Activated B cell treated with CpG ODN at 0.5 μM for 24 hours (primary cell): ENCODE measurements at regions of chr2 and their contacts with region 1.

Region 1: DNA sequence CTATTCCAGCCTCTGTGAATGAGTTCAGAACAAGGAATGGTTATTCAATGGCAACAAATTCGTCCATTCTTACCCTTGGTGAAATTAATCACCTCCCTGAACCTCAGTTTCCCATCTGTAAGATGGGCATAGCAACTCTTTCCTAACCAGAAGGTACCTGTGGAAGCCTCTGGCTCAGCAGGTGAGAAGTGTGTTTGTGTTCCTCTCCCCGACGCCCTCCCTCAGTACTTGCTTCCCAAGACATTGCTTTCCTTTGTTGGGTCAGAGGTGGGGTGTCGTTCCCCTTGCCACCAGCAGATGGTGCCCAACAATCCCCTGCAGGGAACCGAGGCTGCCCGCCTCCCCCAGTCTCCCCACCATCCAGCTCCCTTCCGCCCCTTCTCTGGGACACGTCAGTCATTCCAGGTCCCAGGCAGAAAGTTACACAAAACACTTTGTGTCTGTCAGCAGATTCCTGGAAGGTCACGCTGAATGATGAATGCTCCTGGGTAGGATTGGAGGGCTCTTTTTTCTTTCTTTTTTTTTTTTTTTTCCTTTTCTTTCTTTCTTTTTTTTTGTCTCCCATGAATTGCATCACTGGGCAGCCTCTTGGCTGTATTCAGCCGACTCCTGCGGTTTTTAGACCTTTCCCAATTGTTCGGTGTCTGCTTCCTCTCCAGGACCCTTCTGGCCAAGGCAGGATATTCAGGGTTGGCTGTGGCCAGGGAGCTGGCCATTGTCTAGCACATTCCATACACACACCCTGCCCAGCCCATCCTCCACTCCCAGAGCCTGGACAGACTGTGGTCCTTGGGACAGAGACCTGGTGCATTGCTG is 117.3 kb downstream of the LPIN1 start:
- DNase-seq: peak; percentile 41
- ATAC-seq: peak; percentile 65
- H3K4me3 Mint-ChIP-seq: peak overlapping the region; percentile 47
- H3K27ac Mint-ChIP-seq: peak overlapping the region; percentile 41
- H3K4me1 Mint-ChIP-seq: peaks cover 92% of the 10 kb centered on the region
- H3K27me3 Mint-ChIP-seq: no peaks in the 10 kb centered on the region
- CTCF ChIP-seq: peak; percentile 85

Region 2: DNA sequence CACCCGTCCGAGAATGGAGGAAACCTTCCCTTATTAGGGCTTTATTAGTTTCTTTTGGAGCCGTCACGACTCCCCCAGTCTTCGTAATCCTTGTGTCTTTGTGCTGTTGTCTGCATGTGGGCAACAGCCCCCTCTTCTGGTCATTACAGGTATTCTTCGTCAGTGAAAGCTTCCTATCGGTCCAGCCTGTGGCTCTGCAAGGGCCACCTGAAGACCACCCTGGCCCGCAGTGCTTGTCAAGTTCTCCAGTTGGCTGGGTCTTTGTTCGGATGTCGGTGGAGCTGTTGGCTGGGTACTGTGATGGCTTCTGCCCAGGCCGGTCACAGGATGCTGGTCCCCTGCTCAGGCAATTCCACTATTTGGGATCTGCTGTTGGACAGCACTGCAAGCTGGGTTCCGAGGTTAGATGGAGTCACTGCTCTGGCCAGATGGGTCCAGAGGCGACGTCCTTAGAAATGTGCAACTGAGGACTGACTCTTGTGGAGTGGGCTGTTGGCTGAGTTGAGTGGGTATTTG is 416.9 kb before region 1 on chr2:
- CTCF ChIA-PET with region 1: no interaction called
- POLR2A ChIA-PET with region 1: no interaction called
- intact Hi-C with region 1: no loop called
- DNase-seq: peak; percentile 19
- ATAC-seq: peak; percentile 65
- H3K4me3 Mint-ChIP-seq: no peak overlapping the region
- H3K27ac Mint-ChIP-seq: no peak overlapping the region
- H3K4me1 Mint-ChIP-seq: no peaks in the 10 kb centered on the region
- H3K27me3 Mint-ChIP-seq: no peaks in the 10 kb centered on the region
- CTCF ChIP-seq: peak; percentile 18

Region 3: DNA sequence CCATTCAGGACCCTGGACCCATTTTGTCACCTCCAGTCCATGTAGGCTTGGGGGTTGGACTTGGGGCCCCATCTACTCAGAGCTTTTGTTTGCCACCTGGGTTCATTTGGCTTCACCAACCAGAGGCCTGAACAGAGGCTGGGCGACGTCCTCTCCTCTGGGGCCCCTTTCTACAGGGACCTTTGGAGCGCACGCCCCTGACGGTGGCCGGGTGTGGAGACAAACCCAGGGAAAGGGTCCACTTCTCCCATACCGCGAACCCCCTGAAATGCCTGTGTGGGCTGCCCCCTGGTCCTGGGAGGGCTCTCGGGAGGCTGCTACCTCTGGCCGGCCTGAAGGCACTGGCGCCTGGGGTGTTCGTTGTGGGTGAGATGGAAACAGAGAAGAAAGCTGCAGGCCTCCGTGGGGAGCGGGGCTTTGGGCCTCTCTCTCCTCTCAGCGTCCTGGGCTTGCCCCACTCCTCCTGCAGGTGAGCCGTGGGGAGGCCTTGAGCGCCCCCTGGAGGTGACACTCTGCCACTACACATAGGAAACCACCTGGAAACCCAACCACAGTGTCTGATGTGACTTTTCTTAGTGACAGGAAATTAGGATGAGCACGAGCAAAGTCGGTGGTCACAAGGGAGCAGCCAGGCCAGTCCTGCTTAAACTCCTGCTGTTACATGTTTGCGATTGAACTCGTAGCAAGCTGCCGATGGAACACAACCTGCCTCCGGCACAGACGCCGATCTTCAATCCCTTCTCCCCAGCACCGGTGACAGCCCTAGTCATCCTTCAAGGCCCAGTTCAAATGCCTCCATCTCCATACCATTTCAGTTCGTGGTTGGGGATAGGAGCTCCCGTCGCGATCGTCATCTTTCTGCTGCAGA is 181.8 kb before region 1 on chr2:
- CTCF ChIA-PET with region 1: no interaction called
- POLR2A ChIA-PET with region 1: no interaction called
- intact Hi-C with region 1: no loop called
- DNase-seq: no peak
- ATAC-seq: peak; percentile 73
- H3K4me3 Mint-ChIP-seq: no peak overlapping the region
- H3K27ac Mint-ChIP-seq: no peak overlapping the region
- H3K4me1 Mint-ChIP-seq: no peaks in the 10 kb centered on the region
- H3K27me3 Mint-ChIP-seq: peaks cover 26% of the 10 kb centered on the region
- CTCF ChIP-seq: no peak

Region 4: GRCh38 chr2:11829947-11830707 is 33.6 kb before region 1 on chr2:
- CTCF ChIA-PET with region 1: interaction called, 8 read pairs
- POLR2A ChIA-PET with region 1: interaction called, 4 read pairs
- intact Hi-C with region 1: loop called (anchors 1 kb)
- DNase-seq: peak; percentile 40
- ATAC-seq: peak; percentile 66
- H3K4me3 Mint-ChIP-seq: peak overlapping the region; percentile 75
- H3K27ac Mint-ChIP-seq: peak overlapping the region; percentile 75
- H3K4me1 Mint-ChIP-seq: peaks cover 64% of the 10 kb centered on the region
- H3K27me3 Mint-ChIP-seq: no peaks in the 10 kb centered on the region
- CTCF ChIP-seq: no peak

Region 5: GRCh38 chr2:11945139-11946126 is 81.7 kb after region 1 on chr2:
- CTCF ChIA-PET with region 1: no interaction called
- POLR2A ChIA-PET with region 1: no interaction called
- intact Hi-C with region 1: loop called (anchors 5 kb)
- DNase-seq: no peak
- ATAC-seq: peak; percentile 82
- H3K4me3 Mint-ChIP-seq: peak overlapping the region; percentile 73
- H3K27ac Mint-ChIP-seq: peak overlapping the region; percentile 82
- H3K4me1 Mint-ChIP-seq: peaks cover 29% of the 10 kb centered on the region
- H3K27me3 Mint-ChIP-seq: no peaks in the 10 kb centered on the region
- CTCF ChIP-seq: no peak

Region 6: DNA sequence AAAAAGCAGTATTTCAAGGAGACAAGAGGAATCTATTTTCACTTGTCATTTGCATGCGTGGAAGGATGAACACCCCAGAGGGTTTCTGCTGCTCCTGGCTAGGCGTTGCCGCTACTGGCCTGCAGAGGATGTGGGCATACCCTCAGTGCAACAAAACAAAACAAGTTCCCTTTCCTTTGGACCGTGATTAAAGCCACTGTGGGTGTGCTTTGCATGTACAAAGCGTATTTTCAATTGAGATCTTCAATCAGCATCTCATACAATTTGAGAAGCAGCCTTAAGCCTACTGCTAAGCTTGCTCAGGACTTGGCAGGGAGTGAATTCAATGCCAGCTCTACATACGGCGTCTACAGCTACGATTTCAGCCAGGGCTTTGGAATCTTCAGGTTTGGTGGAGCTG is 181.1 kb after region 1 on chr2:
- CTCF ChIA-PET with region 1: interaction called, 4 read pairs
- POLR2A ChIA-PET with region 1: no interaction called
- intact Hi-C with region 1: loop called (anchors 2 kb)
- DNase-seq: no peak
- ATAC-seq: peak; percentile 89
- H3K4me3 Mint-ChIP-seq: peak overlapping the region; percentile 44
- H3K27ac Mint-ChIP-seq: peak overlapping the region; percentile 68
- H3K4me1 Mint-ChIP-seq: peaks cover 97% of the 10 kb centered on the region
- H3K27me3 Mint-ChIP-seq: no peaks in the 10 kb centered on the region
- CTCF ChIP-seq: no peak

Region 7: GRCh38 chr2:12326449-12327190 is 462.9 kb after region 1 on chr2:
- CTCF ChIA-PET with region 1: interaction called, 8 read pairs
- POLR2A ChIA-PET with region 1: no interaction called
- intact Hi-C with region 1: loop called (anchors 1 kb)
- DNase-seq: no peak
- ATAC-seq: no peak
- H3K4me3 Mint-ChIP-seq: no peak overlapping the region
- H3K27ac Mint-ChIP-seq: no peak overlapping the region
- H3K4me1 Mint-ChIP-seq: peaks cover 26% of the 10 kb centered on the region
- H3K27me3 Mint-ChIP-seq: no peaks in the 10 kb centered on the region
- CTCF ChIP-seq: no peak